H1 (cell line): ENCODE measurements at regions of chr10 and their contacts with region 1.

Region 1: DNA sequence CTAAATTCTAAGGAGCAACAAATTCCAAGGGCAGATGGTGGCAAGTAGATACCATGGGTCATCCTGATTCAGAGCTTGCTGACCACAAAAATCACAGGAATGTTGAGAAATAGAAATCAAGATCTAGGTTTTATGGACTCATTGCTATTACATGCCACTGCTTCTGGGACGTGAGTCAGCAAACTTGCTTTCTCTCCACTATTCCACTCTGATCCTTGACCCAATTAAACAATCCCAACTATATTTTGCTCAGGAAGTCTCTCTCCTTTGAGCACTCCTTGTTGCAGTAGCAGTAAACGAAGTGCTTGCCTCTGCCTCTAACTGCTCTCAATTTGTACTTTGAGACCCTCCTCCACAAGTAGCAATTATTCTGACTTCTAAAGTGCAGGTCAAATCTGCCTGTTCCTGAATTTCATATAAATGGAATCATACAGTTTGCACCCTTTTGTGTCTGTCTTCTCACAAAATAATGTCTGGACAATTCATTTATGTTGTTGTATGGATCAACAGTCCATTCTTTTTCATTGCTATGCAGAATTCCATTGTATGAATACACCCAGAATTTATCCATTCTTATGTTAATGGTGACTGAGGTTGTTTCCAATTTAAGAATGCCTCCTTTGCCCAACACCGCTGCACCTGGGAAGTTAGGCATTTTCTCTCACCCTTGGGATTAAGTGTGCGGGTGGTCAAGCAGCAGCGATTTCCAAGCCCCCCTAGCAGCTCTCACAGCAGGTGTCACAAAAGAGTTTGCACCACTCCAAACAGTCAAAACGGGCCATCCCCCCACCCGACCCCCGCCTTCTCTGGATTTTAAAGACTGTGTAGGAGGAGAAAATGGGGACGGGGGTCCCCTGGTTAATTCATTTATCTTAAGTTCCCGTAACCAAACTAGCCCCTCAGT is 35.9 kb downstream of the ACSM6 start:
- DNase-seq: peak; percentile 66 to 84
- H3K4me3 ChIP-seq: peak overlapping the region; percentile 23 to 55 (median 28)
- H3K27ac ChIP-seq: peak overlapping the region; percentile 99
- H3K4me1 ChIP-seq: peaks cover 4 to 34% (median 23%) of the 10 kb centered on the region in 4 experiments; a peak in 6 of 7 replicates
- H3K27me3 ChIP-seq: no peaks in the 10 kb centered on the region
- CTCF ChIP-seq: no peak
- EP300 ChIP-seq: peak in 1 of 2 experiments; percentile 91; a peak in 1 of 3 replicates
- POLR2A ChIP-seq: peak in 1 of 2 experiments; percentile 67; a peak in 1 of 3 replicates
- RAD21 ChIP-seq: no peak

Region 2: GRCh38 chr10:95196053-95196452 is 33.9 kb before region 1 on chr10:
- CTCF ChIA-PET with region 1: interaction called, 5 read pairs
- POLR2A ChIA-PET with region 1: interaction called, 32 read pairs
- DNase-seq: no peak
- H3K4me3 ChIP-seq: no peak overlapping the region
- H3K27ac ChIP-seq: no peak overlapping the region
- H3K4me1 ChIP-seq: peaks cover 2 to 9% (median 6%) of the 10 kb centered on the region in 4 experiments; a peak in 4 of 7 replicates
- H3K27me3 ChIP-seq: no peaks in the 10 kb centered on the region; a peak in 1 of 7 replicates
- CTCF ChIP-seq: no peak
- EP300 ChIP-seq: no peak
- POLR2A ChIP-seq: no peak
- RAD21 ChIP-seq: 0 out of 4 replicates have a peak, but pooled peaks of 1 of the 2 experiments have one; percentile 9

Region 3: GRCh38 chr10:95208702-95209391 is 21.1 kb before region 1 on chr10:
- CTCF ChIA-PET with region 1: interaction called, 6 read pairs
- POLR2A ChIA-PET with region 1: interaction called, 27 read pairs
- DNase-seq: no peak
- H3K4me3 ChIP-seq: no peak overlapping the region
- H3K27ac ChIP-seq: peak overlapping the region; percentile 62; the same call in 1 of the 2 replicates
- H3K4me1 ChIP-seq: peaks cover 0 to 5% (median 3%) of the 10 kb centered on the region in 4 experiments; a peak in 5 of 7 replicates
- H3K27me3 ChIP-seq: no peaks in the 10 kb centered on the region
- CTCF ChIP-seq: no peak
- EP300 ChIP-seq: no peak
- POLR2A ChIP-seq: no peak
- RAD21 ChIP-seq: peak in 1 of 2 experiments; percentile 7; a peak in 1 of 4 replicates

Region 4: GRCh38 chr10:95260397-95260881 is 30.5 kb after region 1 on chr10:
- CTCF ChIA-PET with region 1: no interaction called
- POLR2A ChIA-PET with region 1: interaction called, 17 read pairs
- DNase-seq: peak in 1 of 2 experiments; percentile 28
- H3K4me3 ChIP-seq: no peak overlapping the region
- H3K27ac ChIP-seq: no peak overlapping the region
- H3K4me1 ChIP-seq: peaks cover 5 to 21% (median 12%) of the 10 kb centered on the region in 4 experiments
- H3K27me3 ChIP-seq: no peaks in the 10 kb centered on the region
- CTCF ChIP-seq: no peak
- EP300 ChIP-seq: no peak
- POLR2A ChIP-seq: no peak
- RAD21 ChIP-seq: no peak

Region 5: GRCh38 chr10:95319239-95319638 is 89.3 kb after region 1 on chr10:
- CTCF ChIA-PET with region 1: no interaction called
- POLR2A ChIA-PET with region 1: no interaction called
- DNase-seq: no peak
- H3K4me3 ChIP-seq: no peak overlapping the region
- H3K27ac ChIP-seq: no peak overlapping the region
- H3K4me1 ChIP-seq: no peaks in the 10 kb centered on the region
- H3K27me3 ChIP-seq: no peaks in the 10 kb centered on the region
- CTCF ChIP-seq: no peak
- EP300 ChIP-seq: no peak
- POLR2A ChIP-seq: no peak
- RAD21 ChIP-seq: no peak

Region 6: GRCh38 chr10:95437669-95438068 is 207.7 kb after region 1 on chr10:
- CTCF ChIA-PET with region 1: no interaction called
- POLR2A ChIA-PET with region 1: no interaction called
- DNase-seq: no peak
- H3K4me3 ChIP-seq: no peak overlapping the region
- H3K27ac ChIP-seq: no peak overlapping the region
- H3K4me1 ChIP-seq: no peaks in the 10 kb centered on the region
- H3K27me3 ChIP-seq: no peaks in the 10 kb centered on the region
- CTCF ChIP-seq: no peak
- EP300 ChIP-seq: no peak
- POLR2A ChIP-seq: no peak
- RAD21 ChIP-seq: no peak